GM10248 (cell line): ENCODE measurements at regions of chr4 and their contacts with region 1.

Region 1: DNA sequence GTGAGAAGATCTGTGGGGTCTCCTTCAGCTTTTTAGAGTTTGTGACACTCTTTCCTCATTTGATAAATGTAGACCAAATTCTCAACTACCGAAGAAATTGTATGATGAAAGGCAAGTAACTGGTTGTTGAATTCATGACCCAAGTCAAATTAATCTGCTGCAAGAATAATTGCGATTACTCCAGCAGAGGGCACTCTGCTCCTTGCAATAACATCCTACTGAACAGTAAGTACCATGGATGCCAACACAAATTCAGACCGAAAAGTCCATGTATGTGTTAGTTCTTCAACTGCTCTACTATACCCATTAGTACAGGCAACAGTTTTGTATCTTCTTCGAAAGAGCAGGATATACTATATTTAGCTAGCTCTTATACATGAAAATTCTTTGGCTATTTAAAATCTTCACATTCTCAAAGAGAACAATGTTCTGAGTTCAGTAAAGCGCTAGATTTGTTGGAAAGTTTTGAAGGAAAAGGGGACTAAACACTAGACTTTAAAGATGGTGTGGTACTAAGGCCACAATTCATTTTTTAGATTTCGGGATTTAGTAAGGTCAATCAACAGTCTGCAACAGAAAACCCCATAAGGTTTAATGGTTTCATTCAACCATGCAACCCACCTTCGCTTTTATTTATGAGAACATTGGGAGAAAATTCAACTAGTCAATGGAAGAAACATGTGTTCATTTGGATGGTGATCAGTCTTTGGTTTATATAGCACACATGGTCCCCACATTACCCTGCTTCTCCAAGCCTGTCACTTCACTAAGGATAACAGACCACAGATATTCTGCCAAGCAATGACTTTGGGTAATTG is 105.4 kb upstream of the TBC1D9 start:
- DNase-seq: peak; percentile 41
- CTCF ChIP-seq: peak; percentile 65

Region 2: GRCh38 chr4:140884431-140885058 is 23.0 kb after region 1 on chr4:
- CTCF ChIA-PET with region 1: interaction called, 33 read pairs
- POLR2A ChIA-PET with region 1: no interaction called
- DNase-seq: peak; percentile 70
- CTCF ChIP-seq: peak; percentile 64

Region 3: GRCh38 chr4:141133146-141133998 is 271.8 kb after region 1 on chr4 and contains the start of gene RNF150:
- CTCF ChIA-PET with region 1: interaction called, 23 read pairs
- POLR2A ChIA-PET with region 1: no interaction called
- DNase-seq: peak; percentile 58
- CTCF ChIP-seq: peak; percentile 52